ENCODE measurements at regions of chr3 and their contacts with region 1.

Region 1: GRCh38 chr3:157405457-157405856 is 31.2 kb upstream of the PTX3 start:
- DNase-seq: no peak
- ATAC-seq: no peak
- H3K4me3 ChIP-seq: no peak overlapping the region
- H3K27ac ChIP-seq: no peak overlapping the region
- H3K4me1 ChIP-seq: no peaks in the 10 kb centered on the region
- H3K27me3 ChIP-seq: peaks cover 0 to 3% (median 0%) of the 10 kb centered on the region in 9 donors
- CTCF ChIP-seq: no peak
- POLR2A ChIP-seq: no peak

Region 2: DNA sequence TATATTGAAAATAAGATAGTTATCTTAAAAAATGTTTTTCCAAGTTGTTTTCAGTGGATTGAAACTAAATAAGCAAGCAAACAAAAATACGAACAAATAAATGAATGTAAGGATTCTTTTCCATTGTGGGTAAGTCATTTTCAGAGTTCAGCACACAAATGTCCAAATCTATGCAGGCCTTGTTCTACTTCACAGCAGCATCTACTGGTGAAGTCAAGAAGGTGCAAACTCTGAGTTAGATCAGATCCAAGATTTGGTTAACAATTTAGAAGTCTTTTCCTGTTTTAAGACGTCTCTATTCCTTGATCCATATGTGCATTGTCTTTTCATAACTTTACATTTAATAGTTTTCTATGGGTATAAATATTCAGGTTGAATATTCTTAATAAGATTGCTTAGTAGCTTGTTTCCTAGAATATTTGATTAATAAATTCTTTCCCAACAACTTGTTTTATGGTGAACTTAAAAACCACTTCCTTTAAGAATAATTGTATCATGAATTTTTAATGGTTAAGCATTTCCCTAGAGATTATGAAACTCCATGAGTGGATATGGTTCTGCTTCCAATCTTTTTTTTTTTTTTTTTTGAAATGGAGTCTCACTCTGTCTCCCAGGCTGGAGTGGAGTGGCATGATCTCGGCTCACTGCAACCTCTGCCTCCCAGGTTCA is 41.7 kb after region 1 on chr3:
- intact Hi-C with region 1: loop called in 1 of 10 experiments (anchors 2 kb)
- DNase-seq: no peak
- ATAC-seq: no peak
- H3K4me3 ChIP-seq: no peak overlapping the region
- H3K27ac ChIP-seq: no peak overlapping the region
- H3K4me1 ChIP-seq: peaks cover 0 to 14% (median 0%) of the 10 kb centered on the region in 12 donors
- H3K27me3 ChIP-seq: no peaks in the 10 kb centered on the region
- CTCF ChIP-seq: peak in 9 of 12 donors; percentile 22 to 60 (median 32)
- POLR2A ChIP-seq: no peak